ENCODE measurements at regions of chr17 and their contacts with region 1.

Region 1: GRCh38 chr17:32006957-32007462 is at the start of gene LRRC37B:
- DNase-seq: peak; percentile 81
- H3K4me3 Mint-ChIP-seq: peak within 1 kb of the TSS; percentile 88
- H3K27ac Mint-ChIP-seq: peak within 1 kb of the TSS; percentile 88
- H3K4me1 Mint-ChIP-seq: peaks cover 18% of the 10 kb centered on the region
- H3K27me3 Mint-ChIP-seq: no peaks in the 10 kb centered on the region
- CTCF ChIP-seq: peak; percentile 96
- total RNA-seq, gene LRRC37B: 11.8 and 20.9 TPM in 2 replicates

Region 2: DNA sequence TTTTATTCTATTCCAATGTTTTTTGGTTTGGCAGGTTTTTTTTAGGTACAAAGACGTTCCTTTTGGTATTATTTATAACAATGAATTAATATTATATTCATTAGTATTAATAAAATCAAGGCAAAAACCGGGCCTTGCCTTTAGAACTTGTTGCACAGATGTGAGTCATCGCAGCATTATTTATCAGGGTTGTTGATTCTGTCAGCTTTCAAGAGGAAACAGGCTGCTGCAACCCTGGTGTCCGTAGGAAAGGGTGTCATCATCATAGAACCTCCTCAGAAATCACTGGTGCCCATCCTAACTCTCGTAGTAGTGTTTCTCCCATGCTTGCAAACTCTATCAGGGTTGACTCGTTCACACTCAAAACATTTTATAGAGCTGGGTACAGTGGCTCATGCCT is 10.0 kb before region 1 on chr17:
- CTCF ChIA-PET with region 1: interaction called, 9 read pairs
- POLR2A ChIA-PET with region 1: interaction called, 16 read pairs
- intact Hi-C with region 1: no loop called
- DNase-seq: no peak
- H3K4me3 Mint-ChIP-seq: no peak overlapping the region
- H3K27ac Mint-ChIP-seq: no peak overlapping the region
- H3K4me1 Mint-ChIP-seq: no peaks in the 10 kb centered on the region
- H3K27me3 Mint-ChIP-seq: no peaks in the 10 kb centered on the region
- CTCF ChIP-seq: no peak

Region 3: GRCh38 chr17:32100971-32101631 is 94.1 kb after region 1 on chr17:
- CTCF ChIA-PET with region 1: no interaction called
- POLR2A ChIA-PET with region 1: no interaction called
- intact Hi-C with region 1: no loop called
- DNase-seq: no peak
- H3K4me3 Mint-ChIP-seq: no peak overlapping the region
- H3K27ac Mint-ChIP-seq: no peak overlapping the region
- H3K4me1 Mint-ChIP-seq: no peaks in the 10 kb centered on the region
- H3K27me3 Mint-ChIP-seq: no peaks in the 10 kb centered on the region
- CTCF ChIP-seq: no peak

Region 4: DNA sequence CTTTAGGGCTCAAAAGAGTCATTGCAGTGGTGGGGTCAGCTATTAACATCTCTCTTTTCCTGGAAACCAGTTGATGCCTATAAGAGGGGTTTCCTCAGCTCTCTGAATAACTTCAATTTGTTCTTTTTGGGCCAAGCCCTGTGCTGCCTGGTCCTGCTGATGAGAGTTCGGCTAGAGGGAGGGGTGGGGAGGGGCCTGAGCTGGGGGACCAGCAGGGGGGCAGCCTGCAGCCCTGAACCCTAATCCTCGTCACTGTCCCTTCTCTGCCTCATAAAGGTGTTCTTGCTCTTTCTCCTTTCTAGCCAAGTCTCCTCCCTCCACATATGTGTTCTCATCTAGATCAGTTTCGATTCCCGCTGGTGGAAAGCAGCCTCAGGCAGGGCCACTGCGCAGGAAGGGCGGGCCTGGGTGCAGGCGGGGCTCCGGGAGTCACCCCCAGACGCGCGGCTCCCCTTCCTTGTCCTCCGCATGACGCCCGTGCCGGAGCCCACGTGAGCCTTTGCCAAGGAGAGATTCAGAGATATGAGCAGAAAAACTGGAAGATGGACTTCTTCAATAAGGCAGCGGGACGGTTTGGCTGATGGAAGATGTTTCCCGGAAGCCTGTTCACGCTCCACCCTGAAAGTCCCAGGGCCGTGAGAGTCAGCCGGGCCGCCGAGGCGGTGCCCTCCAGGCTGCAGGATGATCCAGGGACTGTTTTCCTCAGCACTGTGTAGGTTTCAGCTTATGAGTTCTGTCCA is 120.3 kb after region 1 on chr17:
- CTCF ChIA-PET with region 1: interaction called, 3 read pairs
- POLR2A ChIA-PET with region 1: interaction called, 15 read pairs
- intact Hi-C with region 1: no loop called
- DNase-seq: peak; percentile 83
- H3K4me3 Mint-ChIP-seq: peak overlapping the region; percentile 86
- H3K27ac Mint-ChIP-seq: peak overlapping the region; percentile 92
- H3K4me1 Mint-ChIP-seq: peaks cover 5% of the 10 kb centered on the region
- H3K27me3 Mint-ChIP-seq: no peaks in the 10 kb centered on the region
- CTCF ChIP-seq: no peak

Region 5: DNA sequence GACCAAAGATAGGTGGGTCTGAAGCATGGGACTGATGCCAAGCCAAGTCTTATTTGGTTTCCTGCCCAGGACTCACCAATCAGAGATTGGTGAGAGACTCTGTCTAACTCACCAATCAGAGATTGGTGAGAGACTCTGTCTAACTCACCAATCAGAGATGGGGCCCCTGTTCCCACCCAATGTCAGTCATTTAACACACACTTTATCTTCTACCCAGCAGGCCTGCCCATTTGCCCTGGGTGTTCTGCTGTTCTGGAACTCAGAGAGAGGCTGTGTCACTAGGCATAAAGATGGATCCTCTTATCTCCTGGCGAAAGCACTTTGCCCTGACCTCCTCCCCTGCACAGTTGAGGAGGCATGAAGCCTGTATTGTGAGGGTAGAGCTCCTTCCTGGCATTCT is 129.8 kb after region 1 on chr17:
- CTCF ChIA-PET with region 1: interaction called, 46 read pairs
- POLR2A ChIA-PET with region 1: interaction called, 40 read pairs
- intact Hi-C with region 1: loop called (anchors 2 kb)
- DNase-seq: no peak
- H3K4me3 Mint-ChIP-seq: no peak overlapping the region
- H3K27ac Mint-ChIP-seq: no peak overlapping the region
- H3K4me1 Mint-ChIP-seq: peaks cover 7% of the 10 kb centered on the region
- H3K27me3 Mint-ChIP-seq: no peaks in the 10 kb centered on the region
- CTCF ChIP-seq: no peak

Region 6: GRCh38 chr17:32142038-32142856 is 135.2 kb after region 1 on chr17 and contains the start of gene RHOT1:
- CTCF ChIA-PET with region 1: interaction called, 46 read pairs
- POLR2A ChIA-PET with region 1: interaction called, 40 read pairs
- intact Hi-C with region 1: loop called (anchors 2 kb)
- DNase-seq: peak; percentile 86
- H3K4me3 Mint-ChIP-seq: peak within 1 kb of the TSS; percentile 96
- H3K27ac Mint-ChIP-seq: peak within 1 kb of the TSS; percentile 87
- H3K4me1 Mint-ChIP-seq: peaks cover 13% of the 10 kb centered on the region
- H3K27me3 Mint-ChIP-seq: no peaks in the 10 kb centered on the region
- CTCF ChIP-seq: peak; percentile 47
- total RNA-seq, gene RHOT1: 19.8 and 21.9 TPM in 2 replicates

Measured in MCF 10A (cell line).